Colonic mucosa (tissue), 4 donors: ENCODE measurements at regions of chr14 and their contacts with region 1.

Region 1: GRCh38 chr14:100192672-100193416 is 33.4 kb upstream of the DEGS2 start:
- DNase-seq: peak; percentile 100
- H3K4me3 ChIP-seq: peak overlapping the region; percentile 35
- H3K27ac ChIP-seq: peak overlapping the region; percentile 76
- H3K4me1 ChIP-seq: peaks cover 9% of the 10 kb centered on the region
- H3K27me3 ChIP-seq: no peaks in the 10 kb centered on the region
- CTCF ChIP-seq: peak; percentile 94

Region 2: DNA sequence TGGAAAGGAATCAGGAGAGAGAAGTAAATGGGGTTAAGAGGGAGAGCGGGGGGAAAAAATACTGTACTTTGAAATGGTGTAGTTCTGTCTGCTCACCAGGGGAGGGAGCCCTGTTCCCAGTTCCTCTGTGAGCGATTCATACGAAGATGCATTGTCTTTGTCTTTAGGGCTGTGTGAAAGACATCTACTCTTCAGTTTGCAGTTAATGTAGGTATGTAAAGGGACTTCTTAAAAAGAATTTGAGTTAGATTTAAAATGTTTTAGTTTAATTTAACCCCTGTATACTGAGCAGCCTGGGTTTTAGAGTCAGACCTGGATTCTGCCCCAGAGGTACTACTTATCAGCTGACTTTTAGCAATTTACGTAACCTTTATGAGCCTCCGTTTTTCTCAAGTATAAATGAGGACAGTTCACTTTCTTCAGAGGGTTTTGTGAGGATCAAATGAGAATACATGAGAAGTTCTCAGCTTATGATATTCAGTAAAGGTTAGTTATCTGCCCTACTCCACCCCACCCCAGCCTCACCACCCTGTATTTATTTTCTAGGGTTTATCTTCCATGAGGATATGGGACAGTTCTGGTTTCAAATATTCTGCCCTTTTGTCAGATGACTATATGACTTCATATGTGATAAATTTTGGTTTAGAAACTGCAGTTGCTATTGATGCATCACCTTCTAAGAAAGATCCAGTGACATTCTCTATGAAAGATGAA is 210.2 kb before region 1 on chr14:
- intact Hi-C with region 1: loop called (anchors 5 kb)
- DNase-seq: peak; percentile 58
- H3K4me3 ChIP-seq: no peak overlapping the region
- H3K27ac ChIP-seq: no peak overlapping the region
- H3K4me1 ChIP-seq: no peaks in the 10 kb centered on the region
- H3K27me3 ChIP-seq: peaks cover 11% of the 10 kb centered on the region
- CTCF ChIP-seq: peak; percentile 61

Region 3: DNA sequence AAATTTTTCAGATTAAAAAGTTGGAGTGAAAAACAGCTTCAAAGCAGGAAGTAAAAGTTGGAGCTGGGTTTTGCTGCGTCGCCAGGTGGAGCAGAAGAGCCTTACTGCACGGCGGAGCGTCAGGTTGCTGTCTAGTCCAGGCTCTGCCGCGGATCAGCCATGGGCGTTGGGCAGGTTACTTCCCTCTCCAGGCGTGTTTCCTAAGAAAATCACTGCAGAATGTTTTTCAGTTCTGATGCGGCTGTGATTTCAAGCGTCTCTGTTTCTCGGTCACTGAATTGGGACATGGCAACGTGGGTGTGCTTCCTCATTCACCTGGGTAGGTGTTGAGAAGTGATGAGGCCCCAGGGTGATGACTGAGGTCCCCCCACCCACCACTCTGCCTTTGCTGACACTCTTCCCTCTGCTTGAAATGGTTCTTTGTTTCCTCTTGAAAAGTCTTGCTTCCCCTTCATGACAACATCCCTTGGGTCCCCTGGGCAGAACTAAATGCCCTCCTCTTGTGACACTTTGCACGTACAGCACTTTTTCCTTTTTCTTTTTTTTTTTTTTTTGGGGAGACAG is 120.0 kb before region 1 on chr14:
- intact Hi-C with region 1: loop called (anchors 5 kb)
- DNase-seq: peak; percentile 62
- H3K4me3 ChIP-seq: no peak overlapping the region
- H3K27ac ChIP-seq: no peak overlapping the region
- H3K4me1 ChIP-seq: no peaks in the 10 kb centered on the region
- H3K27me3 ChIP-seq: no peaks in the 10 kb centered on the region
- CTCF ChIP-seq: peak; percentile 17

Region 4: GRCh38 chr14:100122481-100123222 is 70.2 kb before region 1 on chr14:
- intact Hi-C with region 1: loop called (anchors 5 kb)
- DNase-seq: no peak
- H3K4me3 ChIP-seq: no peak overlapping the region
- H3K27ac ChIP-seq: no peak overlapping the region
- H3K4me1 ChIP-seq: no peaks in the 10 kb centered on the region
- H3K27me3 ChIP-seq: no peaks in the 10 kb centered on the region
- CTCF ChIP-seq: no peak